ENCODE measurements at regions of chr15 and their contacts with region 1.

Region 1: DNA sequence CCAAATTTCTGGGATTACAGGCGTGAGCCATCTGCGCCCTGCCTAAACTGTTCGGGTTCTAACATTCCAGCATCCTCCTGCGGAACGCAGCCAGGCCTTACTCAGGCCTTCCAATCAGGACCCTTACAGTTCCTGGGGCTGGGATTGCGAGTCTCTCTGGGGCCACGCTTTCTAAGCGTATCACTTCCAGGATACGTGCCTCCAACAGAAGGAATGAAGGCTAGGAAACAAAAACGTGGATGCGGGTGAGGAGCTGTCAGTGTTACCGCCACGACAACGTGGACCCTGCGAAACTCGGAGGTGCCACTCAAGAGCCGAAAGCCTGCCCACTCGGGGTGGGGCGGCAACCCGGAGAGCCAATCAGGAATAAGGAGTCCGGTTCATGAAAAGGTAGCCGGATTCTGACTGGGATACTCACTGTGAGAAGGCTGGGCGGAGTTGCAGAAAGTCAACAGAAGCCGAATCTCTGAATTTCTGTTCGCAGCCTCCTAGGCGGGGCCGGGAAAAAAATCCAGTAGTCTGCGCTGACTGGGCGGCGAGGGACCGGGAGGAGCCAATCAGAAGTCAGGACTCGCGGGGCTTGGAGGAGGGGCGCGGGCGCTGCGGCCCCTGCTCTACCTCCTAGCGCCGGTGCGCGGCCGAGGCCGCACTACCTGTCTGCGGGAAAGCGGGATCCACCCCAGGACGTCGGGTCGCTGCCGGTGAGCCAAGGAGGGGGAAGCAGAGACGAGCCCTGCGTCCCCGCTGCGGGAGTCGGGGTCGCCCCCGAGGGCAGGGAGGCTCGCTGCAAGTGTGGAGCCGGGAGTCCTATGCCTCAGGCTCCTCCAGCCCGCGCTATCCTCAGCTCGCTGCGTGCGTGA is at the start of gene HYKK:
- DNase-seq: peak; percentile 86 to 93
- ATAC-seq: peak; percentile 94 to 99 (median 97)
- H3K4me3 ChIP-seq: peak within 1 kb of the TSS; percentile 51 to 96 (median 79)
- H3K27ac ChIP-seq: peak within 1 kb of the TSS in 9 of 10 donors; percentile 18 to 74 (median 57)
- H3K4me1 ChIP-seq: peaks cover 4 to 16% (median 9%) of the 10 kb centered on the region in 9 donors
- H3K27me3 ChIP-seq: peaks cover 0 to 15% (median 0%) of the 10 kb centered on the region in 7 donors
- CTCF ChIP-seq: peak in 2 of 9 donors; percentile 9 to 22
- total RNA-seq, gene HYKK: 4.3 to 7.7 (median 7.1) TPM

Region 2: DNA sequence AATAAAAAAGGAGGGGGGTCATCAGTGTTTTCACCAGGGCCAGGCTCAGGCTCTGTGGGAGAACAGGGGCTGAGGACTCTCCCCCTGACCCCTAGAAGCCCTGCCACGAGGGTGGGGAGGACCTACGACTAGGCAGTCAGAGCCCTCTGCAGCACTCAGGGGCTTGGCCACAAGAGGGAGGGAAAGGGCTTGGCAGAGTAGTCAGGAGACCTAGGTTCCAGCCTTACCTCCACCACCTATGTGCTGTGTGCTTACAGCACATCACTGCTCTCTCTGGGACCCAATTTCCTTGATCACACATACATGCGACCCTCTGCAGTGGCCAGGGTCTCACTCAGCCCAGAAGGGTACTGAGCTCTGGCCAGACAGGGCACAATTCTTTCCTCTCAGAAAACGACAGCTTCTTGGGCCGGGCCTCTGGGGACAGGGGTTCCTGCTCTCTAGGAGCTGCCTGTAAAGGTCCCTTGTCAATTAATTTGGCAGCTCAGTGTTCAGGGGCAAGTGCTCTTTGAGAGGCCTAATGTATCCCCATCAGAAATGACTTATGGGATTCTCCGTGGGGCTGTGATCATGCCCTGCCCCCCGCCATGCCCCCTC is 191.4 kb before region 1 on chr15:
- intact Hi-C with region 1: no loop called
- DNase-seq: no peak
- ATAC-seq: peak in 1 of 8 donors; percentile 21
- H3K4me3 ChIP-seq: no peak overlapping the region
- H3K27ac ChIP-seq: no peak overlapping the region
- H3K4me1 ChIP-seq: peaks cover 0 to 5% (median 0%) of the 10 kb centered on the region in 9 donors
- H3K27me3 ChIP-seq: peaks cover 0 to 4% (median 0%) of the 10 kb centered on the region in 7 donors
- CTCF ChIP-seq: no peak

Region 3: GRCh38 chr15:78449220-78449999 is 57.8 kb before region 1 on chr15:
- intact Hi-C with region 1: loop called in 1 of 10 experiments (anchors 10 kb)
- DNase-seq: no peak
- ATAC-seq: no peak
- H3K4me3 ChIP-seq: no peak overlapping the region
- H3K27ac ChIP-seq: peak overlapping the region in 3 of 10 donors; percentile 0 to 46 (median 17)
- H3K4me1 ChIP-seq: peaks cover 9 to 67% (median 49%) of the 10 kb centered on the region in 9 donors
- H3K27me3 ChIP-seq: no peaks in the 10 kb centered on the region
- CTCF ChIP-seq: no peak

Region 4: DNA sequence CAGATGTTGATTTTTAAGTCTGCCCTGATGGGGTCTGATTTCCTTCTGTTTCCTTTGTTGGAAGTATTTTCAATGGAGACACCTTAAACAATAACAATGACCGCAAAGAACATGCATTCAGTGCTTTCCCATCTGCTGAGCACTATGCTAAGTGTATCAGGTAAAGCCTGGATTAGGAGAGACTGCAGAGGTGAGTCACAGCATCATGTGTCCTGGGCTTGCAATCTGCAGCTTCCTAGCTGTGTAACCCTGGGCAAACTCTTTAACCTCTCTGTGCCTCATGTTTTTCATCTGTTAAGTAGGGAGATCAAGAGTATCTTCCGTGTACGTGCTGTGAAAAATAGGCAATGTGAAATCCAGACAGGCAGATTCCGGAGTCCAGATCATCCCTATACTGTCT is 147.1 kb after region 1 on chr15:
- intact Hi-C with region 1: no loop called
- DNase-seq: no peak
- ATAC-seq: no peak
- H3K4me3 ChIP-seq: no peak overlapping the region
- H3K27ac ChIP-seq: no peak overlapping the region
- H3K4me1 ChIP-seq: no peaks in the 10 kb centered on the region
- H3K27me3 ChIP-seq: peaks cover 0 to 4% (median 0%) of the 10 kb centered on the region in 7 donors
- CTCF ChIP-seq: no peak

Measured in heart right ventricle (tissue), 16 donors.